Panc1 (cell line): ENCODE measurements at regions of chr20 and their contacts with region 1.

Region 1: DNA sequence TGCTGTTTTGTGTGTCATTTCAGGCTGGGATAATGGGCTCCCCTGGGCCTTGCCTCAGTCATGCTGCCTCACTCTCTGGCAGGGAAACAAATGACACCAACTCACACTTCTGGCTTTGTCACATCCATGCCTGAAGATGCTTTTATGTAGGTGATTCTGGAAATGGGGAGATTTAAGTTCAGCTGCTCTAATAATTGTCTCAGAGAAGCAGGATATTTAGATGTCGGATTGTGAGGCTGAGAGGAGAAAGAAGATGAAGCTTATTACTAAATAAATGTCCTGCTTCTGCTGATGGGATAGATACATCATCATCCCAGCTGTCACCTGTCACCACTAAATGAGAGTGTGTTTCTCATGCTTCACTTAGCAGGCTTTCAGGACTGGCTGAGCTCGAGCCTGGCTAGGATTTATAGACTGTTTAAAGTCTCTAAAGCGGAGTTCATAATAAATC is 480.2 kb upstream of the SPTLC3 start:
- DNase-seq: no peak
- ATAC-seq: no peak
- H3K4me3 ChIP-seq: no peak overlapping the region
- H3K27ac ChIP-seq: no peak overlapping the region
- H3K4me1 ChIP-seq: no peaks in the 10 kb centered on the region
- H3K27me3 ChIP-seq: no peaks in the 10 kb centered on the region
- CTCF ChIP-seq: no peak

Region 2: DNA sequence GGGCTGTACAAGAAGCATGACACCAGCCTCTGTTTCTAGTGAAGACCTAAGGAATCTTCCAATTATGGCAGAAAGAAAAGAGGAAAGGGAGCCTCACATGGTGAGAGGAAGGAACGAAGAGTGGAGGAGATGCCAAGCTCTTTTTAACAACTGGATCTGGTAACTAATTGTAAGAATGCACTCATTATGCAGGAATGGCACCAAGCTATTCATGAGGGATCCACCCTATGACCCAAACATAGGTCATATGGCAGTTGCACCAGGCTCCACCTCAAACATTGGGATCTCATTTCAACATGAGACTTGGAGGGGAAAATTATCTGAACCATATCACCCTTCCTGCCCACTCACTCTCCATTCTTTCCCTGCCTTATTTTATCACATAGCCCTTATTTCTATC is 15.9 kb before region 1 on chr20:
- CTCF ChIA-PET with region 1: no interaction called
- POLR2A ChIA-PET with region 1: interaction called, 20 read pairs
- in situ Hi-C with region 1: no loop called
- intact Hi-C with region 1: no loop called
- DNase-seq: no peak
- ATAC-seq: no peak
- H3K4me3 ChIP-seq: no peak overlapping the region
- H3K27ac ChIP-seq: no peak overlapping the region
- H3K4me1 ChIP-seq: no peaks in the 10 kb centered on the region
- H3K27me3 ChIP-seq: no peaks in the 10 kb centered on the region
- CTCF ChIP-seq: no peak

Region 3: DNA sequence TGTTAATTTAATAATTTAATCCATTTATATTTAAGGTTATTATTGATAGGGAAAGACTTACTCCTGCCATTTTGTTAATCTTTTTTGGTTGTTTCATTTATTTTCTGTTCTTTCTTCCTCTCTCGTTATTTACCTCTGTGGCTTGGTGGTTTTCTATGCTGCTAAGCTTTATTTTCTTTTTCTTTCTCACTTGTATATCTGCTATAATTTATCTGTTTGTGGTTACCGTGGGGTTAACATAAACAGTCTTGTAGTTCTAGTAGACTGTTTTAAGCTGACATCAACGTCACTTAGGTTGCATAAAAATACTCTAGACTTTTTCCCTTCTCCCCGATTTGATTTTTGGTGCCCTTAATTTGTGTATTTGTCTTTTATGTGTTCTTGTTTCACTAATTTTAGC is 98.9 kb after region 1 on chr20:
- CTCF ChIA-PET with region 1: no interaction called
- POLR2A ChIA-PET with region 1: no interaction called
- in situ Hi-C with region 1: no loop called
- intact Hi-C with region 1: no loop called
- DNase-seq: no peak
- ATAC-seq: no peak
- H3K4me3 ChIP-seq: no peak overlapping the region
- H3K27ac ChIP-seq: no peak overlapping the region
- H3K4me1 ChIP-seq: no peaks in the 10 kb centered on the region
- H3K27me3 ChIP-seq: no peaks in the 10 kb centered on the region
- CTCF ChIP-seq: no peak

Region 4: DNA sequence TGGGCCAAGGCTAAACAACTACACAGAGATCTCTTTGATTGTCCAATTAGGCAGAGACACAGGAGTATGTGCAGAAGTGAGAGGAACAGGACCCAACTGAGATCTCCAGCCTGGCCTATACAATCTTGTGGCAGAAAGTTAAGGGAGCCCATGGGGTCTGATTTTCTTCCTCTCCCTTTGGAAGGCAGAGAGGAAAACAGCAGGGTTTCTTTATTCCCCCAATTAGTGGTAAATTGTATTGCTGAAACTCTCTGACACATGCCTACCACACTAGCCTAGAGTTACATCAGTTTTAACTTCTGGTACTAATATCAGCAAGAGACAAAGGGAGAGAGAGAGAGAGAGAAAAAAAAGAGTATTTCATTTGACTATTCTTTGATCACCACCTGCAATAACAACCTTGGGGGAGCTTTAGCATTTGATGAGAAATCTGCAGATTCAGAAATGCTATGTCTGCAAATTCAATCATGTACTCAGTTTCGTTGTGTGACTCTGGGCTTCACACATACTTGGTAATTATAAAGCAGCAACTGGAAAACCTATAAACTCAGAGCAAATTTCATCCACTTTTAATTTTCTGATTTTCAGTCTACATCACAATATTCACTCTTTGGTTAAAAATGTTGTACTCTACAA is 219.9 kb after region 1 on chr20:
- CTCF ChIA-PET with region 1: no interaction called
- POLR2A ChIA-PET with region 1: no interaction called
- in situ Hi-C with region 1: no loop called
- intact Hi-C with region 1: no loop called
- DNase-seq: no peak
- ATAC-seq: no peak
- H3K4me3 ChIP-seq: no peak overlapping the region
- H3K27ac ChIP-seq: no peak overlapping the region
- H3K4me1 ChIP-seq: no peaks in the 10 kb centered on the region
- H3K27me3 ChIP-seq: no peaks in the 10 kb centered on the region
- CTCF ChIP-seq: no peak